ENCODE measurements at regions of chr2 and their contacts with region 1.

Region 1: DNA sequence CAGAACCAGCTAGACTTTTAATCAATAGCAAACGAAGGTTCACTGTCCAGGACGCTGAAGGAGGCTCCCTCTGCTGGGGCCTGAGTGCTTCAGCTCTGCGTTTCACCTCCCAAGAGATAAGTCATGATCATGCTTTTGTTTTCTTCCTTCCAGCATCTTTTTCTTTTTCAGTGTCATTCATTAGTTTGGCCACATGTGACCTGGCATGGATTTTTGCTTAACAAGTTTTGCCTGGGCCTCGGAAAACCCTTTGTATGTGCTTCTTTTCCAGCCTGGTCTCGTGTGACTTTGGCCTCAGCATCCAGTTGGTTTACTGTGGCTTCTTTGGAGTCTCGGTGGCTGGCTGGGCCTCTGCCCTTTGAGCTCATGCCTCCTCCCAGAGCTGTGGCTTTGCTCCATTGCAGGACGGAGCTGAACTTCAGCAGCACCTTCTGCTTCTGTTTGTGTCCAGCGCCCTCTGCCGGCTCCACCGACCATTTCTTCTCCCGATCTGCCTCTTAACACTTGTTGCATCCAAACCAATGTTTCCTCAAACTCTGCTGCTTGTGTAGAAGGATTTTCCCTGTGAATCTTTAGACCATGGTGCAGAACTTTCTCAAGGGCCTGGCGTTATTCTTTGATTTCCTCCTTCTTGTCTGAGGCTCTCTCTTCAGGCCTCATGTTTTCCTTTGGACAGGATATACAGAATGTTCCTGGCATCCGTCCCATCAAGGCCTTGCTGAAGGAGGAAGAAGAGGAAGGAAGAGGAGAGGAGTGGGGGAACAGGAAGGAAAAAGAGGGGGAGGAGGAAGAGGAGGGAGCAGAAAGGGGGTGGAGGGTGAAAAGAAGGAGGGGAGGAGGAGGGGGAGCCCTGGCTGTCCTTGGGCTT is 23.6 kb upstream of the HES6 start:
- DNase-seq: peak; percentile 86
- H3K4me3 Mint-ChIP-seq: no peak overlapping the region
- H3K27ac Mint-ChIP-seq: no peak overlapping the region
- H3K4me1 Mint-ChIP-seq: peaks cover 8% of the 10 kb centered on the region
- H3K27me3 Mint-ChIP-seq: no peaks in the 10 kb centered on the region

Region 2: DNA sequence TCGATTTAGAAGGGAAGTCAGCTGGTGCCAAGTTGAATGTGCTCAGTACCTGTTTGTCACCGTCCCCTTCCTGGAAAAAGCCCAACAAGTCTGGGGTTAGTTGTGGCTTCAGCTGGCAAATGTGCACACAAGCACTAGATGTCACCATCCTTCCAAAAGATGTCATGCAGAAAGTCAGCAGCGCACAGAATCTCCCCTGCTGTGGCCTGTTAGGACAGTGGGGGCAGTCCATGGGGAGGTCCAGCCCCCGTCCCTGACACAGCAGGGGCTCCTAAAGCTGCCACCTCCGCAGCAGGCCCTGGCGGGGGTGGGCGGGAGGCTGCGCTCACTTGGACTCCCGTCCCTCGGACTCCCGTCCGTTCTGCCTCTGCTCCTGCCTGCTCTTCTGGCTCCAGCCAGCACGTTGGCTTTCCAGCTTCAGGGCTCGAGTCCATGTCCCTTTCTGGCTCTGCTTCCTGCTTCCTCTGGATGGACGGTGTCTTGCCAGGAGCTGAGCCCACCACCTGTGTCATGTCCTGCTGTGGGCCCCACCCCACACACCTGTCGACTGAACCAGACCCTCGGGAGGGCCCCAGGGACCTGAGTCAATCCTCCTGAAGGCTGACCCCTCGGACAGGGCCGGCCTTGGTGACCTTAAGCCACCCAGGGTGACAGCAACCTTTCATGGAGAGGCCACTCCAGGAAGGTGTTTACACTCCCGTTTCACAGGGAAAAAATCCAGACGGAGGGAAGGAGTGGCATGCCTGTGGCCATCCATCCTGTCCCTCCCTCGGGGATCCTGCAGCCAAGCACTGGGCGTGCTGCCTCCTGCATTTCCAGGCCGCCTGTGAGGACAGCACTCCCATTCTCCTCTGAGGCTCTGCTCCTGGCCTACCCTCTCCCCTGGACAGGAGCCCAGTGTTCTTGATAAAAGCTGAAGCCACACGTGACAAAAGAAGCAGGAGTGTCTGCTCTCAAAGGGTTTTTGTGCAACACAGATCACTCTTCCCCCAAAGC is 681.4 kb before region 1 on chr2:
- CTCF ChIA-PET with region 1: interaction called, 9 read pairs
- POLR2A ChIA-PET with region 1: no interaction called
- intact Hi-C with region 1: loop called (anchors 2 kb)
- DNase-seq: peak; percentile 80
- H3K4me3 Mint-ChIP-seq: no peak overlapping the region
- H3K27ac Mint-ChIP-seq: no peak overlapping the region
- H3K4me1 Mint-ChIP-seq: peaks cover 5% of the 10 kb centered on the region
- H3K27me3 Mint-ChIP-seq: no peaks in the 10 kb centered on the region

Region 3: DNA sequence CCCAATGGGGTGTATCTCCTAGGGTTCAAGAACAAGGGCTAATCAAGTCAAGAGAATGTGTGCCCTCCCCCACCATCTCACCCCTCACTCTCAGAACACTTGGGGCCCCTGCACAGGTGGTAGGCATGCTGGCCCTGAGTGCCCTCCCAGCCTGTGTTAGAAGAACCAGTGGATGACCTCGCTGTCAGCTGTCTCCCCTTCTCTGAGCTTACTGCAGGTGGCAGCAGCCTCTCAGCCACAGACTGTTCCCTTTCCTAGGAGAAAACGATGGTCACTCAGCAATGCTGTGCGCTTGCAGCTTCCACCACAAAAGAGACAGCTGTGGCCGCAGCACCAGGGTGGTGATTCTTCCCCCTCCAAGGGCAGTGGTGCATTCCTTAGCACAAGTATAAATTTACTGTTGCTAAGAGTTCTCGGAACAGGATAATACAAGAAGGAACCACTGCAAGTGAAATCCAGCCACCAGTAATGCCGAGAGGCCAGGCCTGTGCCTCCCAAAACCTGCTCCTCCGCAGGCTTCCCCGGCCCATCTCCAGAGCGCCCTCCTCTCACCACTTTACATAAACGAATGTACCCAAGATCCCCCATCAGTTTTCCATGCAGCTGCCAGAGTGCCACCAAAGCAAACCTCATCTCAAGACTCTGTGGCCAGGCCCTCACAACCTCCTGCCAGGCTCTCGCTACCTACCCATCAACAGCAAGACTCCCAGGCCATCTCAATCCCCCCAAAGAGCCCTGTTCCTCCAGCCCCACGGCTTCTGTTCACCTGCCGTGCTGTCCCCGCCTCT is 404.9 kb before region 1 on chr2:
- CTCF ChIA-PET with region 1: interaction called, 16 read pairs
- POLR2A ChIA-PET with region 1: no interaction called
- intact Hi-C with region 1: loop called (anchors 1 kb)
- DNase-seq: peak; percentile 68
- H3K4me3 Mint-ChIP-seq: peak overlapping the region; percentile 5
- H3K27ac Mint-ChIP-seq: no peak overlapping the region
- H3K4me1 Mint-ChIP-seq: peaks cover 15% of the 10 kb centered on the region
- H3K27me3 Mint-ChIP-seq: peaks cover 36% of the 10 kb centered on the region

Region 4: GRCh38 chr2:238042849-238043584 is 220.4 kb before region 1 on chr2:
- CTCF ChIA-PET with region 1: no interaction called
- POLR2A ChIA-PET with region 1: no interaction called
- intact Hi-C with region 1: no loop called
- DNase-seq: no peak
- H3K4me3 Mint-ChIP-seq: no peak overlapping the region
- H3K27ac Mint-ChIP-seq: peak overlapping the region; percentile 64
- H3K4me1 Mint-ChIP-seq: peaks cover 6% of the 10 kb centered on the region
- H3K27me3 Mint-ChIP-seq: no peaks in the 10 kb centered on the region

Region 5: DNA sequence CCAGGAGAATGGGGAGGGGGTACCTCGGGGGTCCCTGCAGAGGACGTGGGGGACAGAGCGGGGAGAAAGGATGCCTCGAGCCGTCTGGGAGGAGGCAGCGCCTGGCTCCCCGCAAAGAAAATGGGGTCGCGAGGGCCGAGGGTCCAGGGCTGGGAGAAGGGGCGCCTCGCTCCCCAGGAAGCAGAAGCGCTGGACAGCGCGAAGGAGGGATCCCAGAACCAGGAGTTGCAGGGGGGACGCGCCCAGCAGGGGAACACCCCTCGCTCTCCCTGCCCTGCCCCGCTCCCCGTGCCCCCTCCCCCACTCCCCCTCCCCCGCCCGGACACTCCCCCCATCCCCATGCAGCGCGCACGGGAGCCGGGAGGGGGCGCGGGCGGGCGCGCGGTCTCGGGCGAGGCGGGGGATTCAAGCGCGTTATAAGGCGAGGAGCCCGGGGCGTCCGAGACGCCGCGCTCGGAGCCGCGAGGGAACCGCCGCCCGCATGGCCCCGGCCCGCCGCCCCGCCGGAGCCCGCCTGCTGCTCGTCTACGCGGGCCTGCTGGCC is 104.8 kb before region 1 on chr2 and contains the start of gene ERFE:
- CTCF ChIA-PET with region 1: interaction called, 5 read pairs
- POLR2A ChIA-PET with region 1: no interaction called
- intact Hi-C with region 1: loop called (anchors 2 kb)
- DNase-seq: peak; percentile 67
- H3K4me3 Mint-ChIP-seq: peak within 1 kb of the TSS; percentile 56
- H3K27ac Mint-ChIP-seq: no peak within 1 kb of the TSS
- H3K4me1 Mint-ChIP-seq: peaks cover 6% of the 10 kb centered on the region
- H3K27me3 Mint-ChIP-seq: peaks cover 14% of the 10 kb centered on the region
- total RNA-seq, gene ERFE: not detected

Region 6: DNA sequence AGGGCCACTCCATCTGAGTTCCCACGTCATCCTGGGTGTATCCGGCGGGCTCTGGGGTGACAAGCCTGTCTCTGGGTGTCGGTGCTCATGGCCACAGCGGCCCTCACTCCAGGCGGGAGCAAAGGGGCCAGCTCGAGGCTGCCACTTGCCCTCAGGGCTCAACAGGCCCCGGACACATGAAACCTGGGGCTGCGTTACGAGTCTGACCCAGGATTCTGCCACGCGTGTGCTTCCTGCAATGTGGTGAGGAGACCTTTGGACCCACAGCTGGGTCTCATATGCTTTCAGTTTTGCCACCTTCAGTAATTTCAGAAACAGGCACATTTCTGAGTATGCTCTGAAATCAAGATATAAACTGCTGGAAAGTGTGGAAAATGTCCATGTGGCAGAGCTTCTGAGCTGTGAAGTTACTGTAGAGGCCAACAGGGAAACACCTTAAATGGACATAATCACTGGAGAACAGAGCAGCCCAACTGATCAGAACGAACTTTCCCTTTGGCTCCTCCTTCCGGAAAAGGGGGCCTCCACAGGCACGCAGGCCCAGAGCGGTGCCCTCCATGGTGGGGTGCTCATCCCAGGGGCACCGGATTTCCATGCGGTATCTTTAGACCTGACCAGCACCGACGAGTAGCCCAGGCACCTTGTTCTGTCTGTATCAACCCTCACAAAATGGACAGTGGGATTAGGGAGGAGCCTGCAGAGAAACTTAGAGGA is 10.9 kb after region 1 on chr2:
- CTCF ChIA-PET with region 1: interaction called, 12 read pairs
- POLR2A ChIA-PET with region 1: no interaction called
- intact Hi-C with region 1: no loop called
- DNase-seq: no peak
- H3K4me3 Mint-ChIP-seq: no peak overlapping the region
- H3K27ac Mint-ChIP-seq: no peak overlapping the region
- H3K4me1 Mint-ChIP-seq: no peaks in the 10 kb centered on the region
- H3K27me3 Mint-ChIP-seq: no peaks in the 10 kb centered on the region

Region 7: DNA sequence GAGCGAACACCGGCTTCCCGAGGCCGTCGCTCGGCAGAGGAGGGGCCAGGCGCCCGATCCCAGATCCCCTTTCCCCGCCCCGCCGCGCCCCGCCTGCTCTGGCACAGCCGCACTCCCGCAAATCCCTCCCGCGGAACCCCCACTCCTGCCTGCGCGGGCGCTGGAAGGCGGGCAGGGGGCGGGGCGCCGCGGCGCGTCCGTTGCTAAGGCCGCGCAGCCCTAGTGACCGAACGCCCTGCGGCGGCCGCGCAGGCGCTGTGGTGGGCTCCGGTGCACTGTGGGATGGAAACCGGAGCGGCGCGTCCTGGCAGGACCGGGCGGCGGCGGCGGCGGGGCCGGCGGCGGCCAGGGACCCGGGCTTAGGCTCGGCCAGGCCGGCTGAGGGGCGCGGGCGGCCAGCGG is 56.8 kb after region 1 on chr2 and contains the start of gene TRAF3IP1:
- CTCF ChIA-PET with region 1: interaction called, 10 read pairs
- POLR2A ChIA-PET with region 1: no interaction called
- intact Hi-C with region 1: no loop called
- DNase-seq: peak; percentile 89
- H3K4me3 Mint-ChIP-seq: peak within 1 kb of the TSS; percentile 71
- H3K27ac Mint-ChIP-seq: no peak within 1 kb of the TSS
- H3K4me1 Mint-ChIP-seq: peaks cover 16% of the 10 kb centered on the region
- H3K27me3 Mint-ChIP-seq: peaks cover 3% of the 10 kb centered on the region
- total RNA-seq, gene TRAF3IP1: 8.0 to 9.3 TPM

Measured in activated CD4-positive, alpha-beta memory T cell treated with anti-CD3 and anti-CD28 coated beads for 36 hours (primary cell).